ENCODE measurements at regions of chr6 and their contacts with region 1.

Region 1: GRCh38 chr6:45922728-45923351 is 92.8 kb downstream of the CLIC5 start:
- DNase-seq: peak; percentile 55
- H3K4me3 Mint-ChIP-seq: peak overlapping the region; percentile 43
- H3K27ac Mint-ChIP-seq: peak overlapping the region; percentile 82
- H3K4me1 Mint-ChIP-seq: peaks cover 57% of the 10 kb centered on the region
- H3K27me3 Mint-ChIP-seq: peaks cover 4% of the 10 kb centered on the region

Region 2: DNA sequence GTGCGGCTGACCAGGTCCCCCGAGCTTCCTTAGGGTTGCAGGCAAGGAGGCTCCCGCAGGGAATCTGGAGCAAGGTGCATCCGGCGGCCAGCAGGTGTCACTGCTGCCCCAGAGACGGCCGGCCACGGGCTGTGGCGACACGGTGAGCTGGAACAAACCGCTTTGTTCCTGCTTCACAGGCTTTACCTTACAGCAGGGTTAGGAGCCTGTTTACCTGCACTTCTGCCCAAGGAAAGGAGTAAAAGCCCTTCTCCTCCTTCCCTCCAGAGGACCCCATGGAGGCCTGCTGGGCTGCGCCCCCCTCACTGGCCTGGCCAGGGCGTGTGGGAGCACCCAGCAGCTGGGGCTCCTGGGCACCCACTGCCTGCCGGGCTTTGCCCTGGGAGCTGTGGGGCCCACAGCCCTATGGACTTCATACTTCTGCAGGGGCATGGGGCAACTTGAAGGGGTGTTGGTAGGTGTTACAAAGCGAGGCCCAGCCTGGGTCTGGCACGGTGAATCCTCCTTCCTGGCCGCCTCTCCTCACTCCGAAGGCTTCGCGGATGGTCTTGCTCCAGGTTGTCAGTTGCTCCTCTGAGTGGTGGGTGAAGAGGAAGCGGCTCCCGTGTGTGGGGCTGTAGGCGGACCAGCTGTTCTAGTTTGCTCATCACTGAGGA is 1446.9 kb before region 1 on chr6:
- intact Hi-C with region 1: loop called (anchors 1 kb)
- DNase-seq: peak; percentile 61
- H3K4me3 Mint-ChIP-seq: no peak overlapping the region
- H3K27ac Mint-ChIP-seq: no peak overlapping the region
- H3K4me1 Mint-ChIP-seq: no peaks in the 10 kb centered on the region
- H3K27me3 Mint-ChIP-seq: peaks cover 13% of the 10 kb centered on the region

Region 3: DNA sequence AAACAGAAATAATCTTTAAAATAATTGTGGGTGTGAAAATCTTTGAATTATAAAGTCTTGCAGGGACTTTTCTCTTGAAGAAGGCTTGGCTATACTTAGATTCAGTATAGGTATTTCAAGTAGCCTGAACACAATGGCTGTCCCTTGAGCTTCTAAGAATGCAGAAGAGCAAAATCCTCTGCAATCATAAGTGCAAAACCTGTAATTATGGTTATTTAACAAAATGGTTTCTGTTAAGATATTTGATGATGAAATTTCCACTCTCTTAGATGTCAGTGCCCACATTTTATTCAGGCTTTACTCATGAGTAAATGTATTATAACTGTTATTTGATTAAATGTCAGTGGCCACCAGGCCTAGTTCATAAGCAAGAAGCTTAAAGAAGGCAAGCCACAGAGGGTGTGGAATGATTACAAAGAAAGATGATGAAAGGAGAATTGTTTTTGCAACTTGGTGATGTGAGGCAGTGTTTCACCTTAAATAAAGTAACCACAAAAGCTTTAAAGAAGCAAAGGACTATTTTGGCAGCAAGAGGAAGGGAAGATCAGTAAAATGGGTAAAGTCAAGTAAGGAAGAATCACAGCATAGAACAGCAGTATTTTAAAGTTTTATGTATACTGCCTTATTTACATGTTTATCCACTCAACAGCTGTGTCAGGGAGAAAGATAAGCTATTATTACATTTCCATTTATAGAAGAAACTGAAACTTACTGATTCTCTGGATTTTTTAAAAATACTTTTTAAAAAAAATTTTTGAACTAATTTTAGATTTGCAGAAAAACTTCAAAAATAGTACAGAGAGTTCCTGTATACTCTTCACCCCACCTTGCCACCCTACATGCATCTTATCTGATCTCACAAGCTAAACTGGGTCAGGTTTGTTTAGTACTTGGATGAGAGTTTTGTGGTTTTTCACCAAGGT is 945.9 kb before region 1 on chr6:
- intact Hi-C with region 1: loop called (anchors 5 kb)
- DNase-seq: no peak
- H3K4me3 Mint-ChIP-seq: peak overlapping the region; percentile 4
- H3K27ac Mint-ChIP-seq: peak overlapping the region; percentile 84
- H3K4me1 Mint-ChIP-seq: peaks cover 43% of the 10 kb centered on the region
- H3K27me3 Mint-ChIP-seq: no peaks in the 10 kb centered on the region

Region 4: GRCh38 chr6:45310118-45310788 is 612.6 kb before region 1 on chr6:
- intact Hi-C with region 1: loop called (anchors 5 kb)
- DNase-seq: peak; percentile 19
- H3K4me3 Mint-ChIP-seq: peak overlapping the region; percentile 45
- H3K27ac Mint-ChIP-seq: peak overlapping the region; percentile 60
- H3K4me1 Mint-ChIP-seq: peaks cover 42% of the 10 kb centered on the region
- H3K27me3 Mint-ChIP-seq: no peaks in the 10 kb centered on the region

Region 5: DNA sequence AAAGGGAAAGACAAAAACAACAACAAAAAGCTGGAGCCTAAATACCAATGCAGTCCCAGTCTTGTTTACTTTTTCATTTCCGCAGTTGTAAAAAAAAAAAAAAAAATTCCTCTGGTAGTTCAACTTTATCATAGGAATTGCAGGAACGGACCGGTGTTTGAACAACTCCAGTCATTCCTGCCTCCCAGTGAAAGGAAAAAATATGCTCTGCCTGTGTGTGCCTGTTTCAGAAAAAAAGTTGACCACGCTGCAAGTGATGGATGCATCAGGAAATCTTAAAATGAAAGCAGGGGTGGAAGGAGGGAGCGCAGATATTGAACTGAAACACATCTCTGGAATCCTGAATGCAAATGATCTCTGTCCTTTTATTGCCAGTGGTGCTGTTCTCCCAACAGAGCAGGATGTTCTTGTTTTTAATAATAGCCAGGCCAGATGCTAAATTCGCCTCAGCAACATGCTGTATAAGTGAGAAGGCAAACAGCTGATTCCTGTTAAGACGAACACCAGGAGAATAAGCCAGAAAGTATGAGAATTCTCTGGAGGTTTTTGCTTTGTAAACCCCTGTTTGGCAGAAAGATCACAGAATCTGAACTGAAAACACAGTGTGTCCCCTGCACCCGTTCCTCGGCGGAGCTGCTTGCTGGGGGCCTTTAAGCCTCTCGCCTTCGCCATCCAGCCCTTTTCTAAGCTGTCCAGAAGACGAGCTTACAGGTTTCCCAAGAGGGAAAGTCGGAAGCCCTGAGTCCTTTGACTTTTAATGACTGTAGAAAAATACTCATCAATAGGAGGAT is 366.7 kb before region 1 on chr6:
- intact Hi-C with region 1: loop called (anchors 1 kb)
- DNase-seq: no peak
- H3K4me3 Mint-ChIP-seq: no peak overlapping the region
- H3K27ac Mint-ChIP-seq: no peak overlapping the region
- H3K4me1 Mint-ChIP-seq: peaks cover 52% of the 10 kb centered on the region
- H3K27me3 Mint-ChIP-seq: no peaks in the 10 kb centered on the region

Region 6: DNA sequence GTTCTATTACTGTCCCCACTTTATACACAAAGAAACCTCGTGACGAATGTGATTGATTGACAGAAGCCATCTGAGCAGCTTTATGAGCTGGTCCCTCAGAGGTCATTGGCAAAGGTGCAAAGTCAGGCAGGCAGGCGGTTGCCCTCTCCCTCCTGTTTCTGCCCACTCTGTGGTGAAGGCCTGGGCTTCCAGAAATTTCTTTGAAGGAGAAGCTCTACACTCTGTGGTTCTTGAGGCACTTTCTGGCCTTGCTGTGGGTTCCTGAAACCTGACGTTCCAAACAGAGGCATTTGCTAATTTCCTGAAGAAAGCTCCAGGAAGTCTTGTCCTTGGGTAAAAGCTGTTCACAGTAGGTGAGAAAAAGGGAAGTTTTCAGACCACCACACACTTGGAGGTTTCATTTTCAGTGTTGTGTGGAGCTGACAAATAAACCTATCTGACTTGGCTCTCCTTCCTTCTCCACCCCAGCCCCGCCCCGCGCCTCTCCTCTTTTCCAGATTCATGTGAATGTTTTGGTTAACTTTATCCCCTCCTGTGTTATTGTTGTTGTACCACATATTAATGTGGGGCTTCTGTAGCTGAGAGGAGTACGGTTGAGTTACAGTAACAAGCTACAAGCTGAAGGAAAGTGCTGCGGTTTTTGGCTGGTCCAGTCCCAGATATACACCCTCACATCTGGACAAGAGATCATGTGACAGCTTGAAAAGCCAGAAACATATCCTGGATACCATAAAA is 181.2 kb before region 1 on chr6:
- intact Hi-C with region 1: loop called (anchors 1 kb)
- DNase-seq: no peak
- H3K4me3 Mint-ChIP-seq: peak overlapping the region; percentile 2
- H3K27ac Mint-ChIP-seq: peak overlapping the region; percentile 27
- H3K4me1 Mint-ChIP-seq: peaks cover 44% of the 10 kb centered on the region
- H3K27me3 Mint-ChIP-seq: peaks cover 3% of the 10 kb centered on the region

Region 7: GRCh38 chr6:46217671-46218131 is 294.9 kb after region 1 on chr6:
- intact Hi-C with region 1: no loop called
- DNase-seq: no peak
- H3K4me3 Mint-ChIP-seq: no peak overlapping the region
- H3K27ac Mint-ChIP-seq: no peak overlapping the region
- H3K4me1 Mint-ChIP-seq: peaks cover 11% of the 10 kb centered on the region
- H3K27me3 Mint-ChIP-seq: peaks cover 4% of the 10 kb centered on the region